ENCODE measurements at regions of chr12 and their contacts with region 1.

Region 1: GRCh38 chr12:52884526-52885293 is 20.2 kb downstream of the KRT8 start:
- DNase-seq: peak; percentile 86
- ATAC-seq: peak; percentile 82
- H3K4me3 Mint-ChIP-seq: no peak overlapping the region
- H3K27ac Mint-ChIP-seq: no peak overlapping the region
- H3K4me1 Mint-ChIP-seq: peaks cover 7% of the 10 kb centered on the region
- H3K27me3 Mint-ChIP-seq: peaks cover 9% of the 10 kb centered on the region

Region 2: DNA sequence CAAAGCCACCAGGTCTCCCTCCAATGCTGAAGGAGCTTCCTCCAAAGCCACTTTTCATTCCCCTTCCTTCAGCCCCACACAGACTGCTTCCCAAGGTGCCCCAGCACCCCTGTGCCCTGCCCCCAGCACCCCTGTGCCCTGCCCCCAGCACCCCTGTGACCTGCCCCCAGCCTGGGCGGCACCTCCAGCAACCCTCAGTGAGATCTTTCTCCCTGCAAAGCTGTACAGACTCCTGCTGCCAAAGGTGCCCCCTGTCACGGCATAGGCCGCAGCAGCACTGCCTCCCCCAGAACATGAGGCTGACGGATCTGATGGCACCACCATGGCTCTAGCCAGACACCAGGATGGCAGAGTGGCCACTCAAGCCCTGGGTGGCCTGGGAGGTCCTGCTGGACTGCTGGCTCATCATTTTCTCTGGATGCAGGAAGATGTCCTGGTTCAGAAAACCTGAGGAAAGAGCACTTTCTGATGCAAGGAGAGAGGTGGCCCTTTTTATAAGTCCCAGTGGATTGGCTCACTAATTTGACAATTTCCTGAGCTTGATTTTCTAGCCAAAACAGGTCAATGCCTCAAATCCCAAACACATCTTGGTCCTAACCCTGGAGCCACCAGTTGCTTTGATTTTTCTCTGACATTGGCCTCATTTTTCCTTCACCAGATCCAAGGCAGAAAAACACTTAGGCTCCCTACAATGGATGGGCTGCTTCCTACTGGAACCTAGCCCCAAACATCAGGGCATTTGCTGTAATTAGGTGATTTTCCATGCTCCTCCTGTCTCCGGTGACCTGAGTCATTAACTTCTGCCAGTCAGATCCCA is 148.7 kb before region 1 on chr12:
- CTCF ChIA-PET with region 1: no interaction called
- POLR2A ChIA-PET with region 1: no interaction called
- DNase-seq: no peak
- ATAC-seq: no peak
- H3K4me3 Mint-ChIP-seq: no peak overlapping the region
- H3K27ac Mint-ChIP-seq: no peak overlapping the region
- H3K4me1 Mint-ChIP-seq: no peaks in the 10 kb centered on the region
- H3K27me3 Mint-ChIP-seq: peaks cover 6% of the 10 kb centered on the region

Region 3: GRCh38 chr12:52895061-52895887 is 10.6 kb after region 1 on chr12:
- CTCF ChIA-PET with region 1: interaction called, 60 read pairs
- POLR2A ChIA-PET with region 1: no interaction called
- DNase-seq: no peak
- ATAC-seq: no peak
- H3K4me3 Mint-ChIP-seq: no peak overlapping the region
- H3K27ac Mint-ChIP-seq: no peak overlapping the region
- H3K4me1 Mint-ChIP-seq: no peaks in the 10 kb centered on the region
- H3K27me3 Mint-ChIP-seq: peaks cover 2% of the 10 kb centered on the region

Region 4: GRCh38 chr12:52920937-52921826 is 36.5 kb after region 1 on chr12:
- CTCF ChIA-PET with region 1: interaction called, 11 read pairs
- POLR2A ChIA-PET with region 1: no interaction called
- DNase-seq: no peak
- ATAC-seq: no peak
- H3K4me3 Mint-ChIP-seq: no peak overlapping the region
- H3K27ac Mint-ChIP-seq: no peak overlapping the region
- H3K4me1 Mint-ChIP-seq: peaks cover 6% of the 10 kb centered on the region
- H3K27me3 Mint-ChIP-seq: peaks cover 11% of the 10 kb centered on the region

Region 5: GRCh38 chr12:52956987-52957386 is 72.3 kb after region 1 on chr12:
- CTCF ChIA-PET with region 1: interaction called, 26 read pairs
- POLR2A ChIA-PET with region 1: interaction called, 3 read pairs
- DNase-seq: no peak
- ATAC-seq: no peak
- H3K4me3 Mint-ChIP-seq: no peak overlapping the region
- H3K27ac Mint-ChIP-seq: no peak overlapping the region
- H3K4me1 Mint-ChIP-seq: peaks cover 3% of the 10 kb centered on the region
- H3K27me3 Mint-ChIP-seq: peaks cover 2% of the 10 kb centered on the region

Region 6: DNA sequence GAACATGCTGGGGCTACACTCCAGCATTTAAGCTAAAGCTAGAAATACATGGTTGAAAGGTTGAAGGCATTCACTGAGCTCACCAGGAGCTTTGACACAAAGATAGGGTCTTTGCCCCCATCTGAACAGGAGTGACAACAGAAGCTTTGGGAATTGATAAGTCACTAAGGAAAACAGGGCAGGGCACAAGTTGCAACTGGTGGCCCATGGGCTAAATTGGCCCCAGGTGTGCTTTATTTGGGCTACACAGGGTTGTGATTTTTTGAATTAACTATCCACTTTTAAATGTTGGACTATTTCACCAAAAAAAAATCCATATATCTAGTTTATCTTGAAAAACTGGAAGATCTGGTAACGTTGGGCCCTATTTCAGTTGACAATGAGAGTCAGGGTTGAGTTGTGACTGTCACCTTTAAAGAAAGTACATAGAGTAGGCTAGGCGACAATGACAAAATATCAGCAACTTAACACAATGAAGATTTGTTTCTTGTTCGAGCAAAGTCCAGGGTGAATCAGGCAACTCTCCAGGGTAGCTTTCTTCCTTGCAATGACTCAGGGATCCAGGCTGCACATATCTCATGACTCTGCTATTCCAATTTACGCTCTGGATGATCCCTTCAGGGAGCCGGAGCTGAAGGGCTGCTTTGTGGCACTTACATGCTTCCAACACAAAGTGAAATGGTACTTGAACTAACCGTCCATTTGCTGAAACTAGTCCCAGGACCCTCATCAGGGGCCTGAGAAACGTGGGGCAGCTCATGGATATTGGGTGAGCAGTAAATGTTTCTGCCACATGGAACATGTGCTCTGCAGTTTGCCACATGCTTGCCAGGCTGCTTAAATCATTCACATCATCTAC is 108.2 kb after region 1 on chr12:
- CTCF ChIA-PET with region 1: interaction called, 445 read pairs
- POLR2A ChIA-PET with region 1: no interaction called
- DNase-seq: no peak
- ATAC-seq: no peak
- H3K4me3 Mint-ChIP-seq: no peak overlapping the region
- H3K27ac Mint-ChIP-seq: no peak overlapping the region
- H3K4me1 Mint-ChIP-seq: no peaks in the 10 kb centered on the region
- H3K27me3 Mint-ChIP-seq: peaks cover 2% of the 10 kb centered on the region

Measured in activated CD8-positive, alpha-beta T cell treated with anti-CD3 and anti-CD28 coated beads, Interleukin-2, amount 10 ng/mL, durations not matched to agents 7 days and 5 days (primary cell).